Activated naive CD4-positive, alpha-beta T cell treated with anti-CD3 and anti-CD28 coated beads for 36 hours (primary cell): ENCODE measurements at regions of chr13 and their contacts with region 1.

Region 1: GRCh38 chr13:30114571-30115256 is 192.6 kb downstream of the KATNAL1 start:
- DNase-seq: peak; percentile 94
- H3K4me3 Mint-ChIP-seq: peak overlapping the region; percentile 69
- H3K27ac Mint-ChIP-seq: no peak overlapping the region
- H3K4me1 Mint-ChIP-seq: peaks cover 36% of the 10 kb centered on the region
- H3K27me3 Mint-ChIP-seq: no peaks in the 10 kb centered on the region

Region 2: DNA sequence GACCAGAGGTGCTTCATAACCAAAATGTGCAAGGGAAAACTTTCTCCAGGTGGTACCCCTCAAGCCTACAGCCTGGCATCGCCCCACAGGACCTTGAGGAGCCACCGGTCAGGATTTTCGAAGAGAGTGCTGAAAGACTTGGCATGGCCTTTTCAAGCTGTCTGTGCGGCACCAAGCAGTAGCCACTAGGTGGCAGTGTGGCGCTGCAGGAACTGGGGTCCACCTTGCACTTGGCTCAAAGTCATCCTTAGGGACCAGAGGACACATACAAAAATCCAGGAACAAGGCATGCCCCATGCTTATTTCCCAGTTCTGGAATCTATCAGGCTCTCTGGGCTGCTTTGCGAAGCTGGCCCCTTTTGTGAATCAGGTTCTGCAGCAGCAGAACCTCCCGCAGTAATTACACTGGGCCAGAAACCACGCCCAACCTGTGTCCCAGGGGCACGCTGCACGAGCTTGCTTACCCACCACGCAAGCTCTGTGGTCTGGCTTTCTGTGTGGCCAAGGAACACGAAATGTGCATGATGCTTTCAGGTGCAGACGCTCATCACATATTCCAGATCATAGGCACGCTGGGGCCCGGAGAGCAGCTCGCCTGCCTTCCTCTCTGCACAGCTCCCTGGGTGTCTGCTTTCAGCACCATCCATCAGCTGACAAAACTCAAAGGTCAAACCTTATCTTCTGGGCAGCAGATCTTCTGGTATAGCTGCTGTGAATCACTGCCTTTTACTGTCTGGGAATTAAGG is 606.4 kb before region 1 on chr13:
- CTCF ChIA-PET with region 1: interaction called, 3 read pairs
- intact Hi-C with region 1: loop called (anchors 1 kb)
- DNase-seq: peak; percentile 84
- H3K4me3 Mint-ChIP-seq: no peak overlapping the region
- H3K27ac Mint-ChIP-seq: peak overlapping the region; percentile 3
- H3K4me1 Mint-ChIP-seq: peaks cover 3% of the 10 kb centered on the region
- H3K27me3 Mint-ChIP-seq: peaks cover 3% of the 10 kb centered on the region

Region 3: GRCh38 chr13:29595380-29596063 is 519.2 kb before region 1 on chr13 and contains the start of gene SLC7A1:
- CTCF ChIA-PET with region 1: interaction called, 3 read pairs
- intact Hi-C with region 1: loop called (anchors 2 kb)
- DNase-seq: peak; percentile 84
- H3K4me3 Mint-ChIP-seq: peak within 1 kb of the TSS; percentile 90
- H3K27ac Mint-ChIP-seq: peak within 1 kb of the TSS; percentile 95
- H3K4me1 Mint-ChIP-seq: peaks cover 39% of the 10 kb centered on the region
- H3K27me3 Mint-ChIP-seq: no peaks in the 10 kb centered on the region
- total RNA-seq, gene SLC7A1: 115 to 119 TPM

Region 4: DNA sequence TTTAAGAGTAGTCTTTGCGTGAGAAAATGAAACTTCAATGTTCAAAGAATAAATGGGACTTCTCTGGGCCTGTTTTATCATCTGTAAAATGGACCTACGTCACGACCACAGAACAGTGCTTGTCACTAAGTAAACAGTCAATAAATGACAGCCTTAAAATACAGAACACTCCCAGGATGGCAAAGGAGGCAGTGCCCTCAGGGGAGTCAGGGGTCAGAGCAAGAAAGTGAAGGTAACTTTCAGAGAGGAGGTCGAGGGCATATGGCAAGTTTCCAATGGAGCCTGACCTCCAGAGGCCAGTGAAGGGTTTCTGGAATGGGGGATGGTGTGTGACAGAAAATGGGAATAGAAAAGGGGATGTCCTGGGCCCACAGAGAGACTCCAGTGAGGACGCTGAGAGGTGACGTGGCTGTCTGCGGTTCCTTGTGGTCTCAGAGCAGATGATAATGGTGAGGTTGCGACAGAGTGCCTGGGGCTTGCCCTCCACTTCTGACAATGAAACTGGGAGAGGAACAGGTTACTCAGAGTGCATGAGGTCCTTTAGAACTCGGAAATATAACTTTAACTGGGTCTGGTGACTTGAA is 356.1 kb before region 1 on chr13:
- CTCF ChIA-PET with region 1: interaction called, 12 read pairs
- intact Hi-C with region 1: no loop called
- DNase-seq: peak; percentile 84
- H3K4me3 Mint-ChIP-seq: no peak overlapping the region
- H3K27ac Mint-ChIP-seq: no peak overlapping the region
- H3K4me1 Mint-ChIP-seq: peaks cover 10% of the 10 kb centered on the region
- H3K27me3 Mint-ChIP-seq: no peaks in the 10 kb centered on the region

Region 5: DNA sequence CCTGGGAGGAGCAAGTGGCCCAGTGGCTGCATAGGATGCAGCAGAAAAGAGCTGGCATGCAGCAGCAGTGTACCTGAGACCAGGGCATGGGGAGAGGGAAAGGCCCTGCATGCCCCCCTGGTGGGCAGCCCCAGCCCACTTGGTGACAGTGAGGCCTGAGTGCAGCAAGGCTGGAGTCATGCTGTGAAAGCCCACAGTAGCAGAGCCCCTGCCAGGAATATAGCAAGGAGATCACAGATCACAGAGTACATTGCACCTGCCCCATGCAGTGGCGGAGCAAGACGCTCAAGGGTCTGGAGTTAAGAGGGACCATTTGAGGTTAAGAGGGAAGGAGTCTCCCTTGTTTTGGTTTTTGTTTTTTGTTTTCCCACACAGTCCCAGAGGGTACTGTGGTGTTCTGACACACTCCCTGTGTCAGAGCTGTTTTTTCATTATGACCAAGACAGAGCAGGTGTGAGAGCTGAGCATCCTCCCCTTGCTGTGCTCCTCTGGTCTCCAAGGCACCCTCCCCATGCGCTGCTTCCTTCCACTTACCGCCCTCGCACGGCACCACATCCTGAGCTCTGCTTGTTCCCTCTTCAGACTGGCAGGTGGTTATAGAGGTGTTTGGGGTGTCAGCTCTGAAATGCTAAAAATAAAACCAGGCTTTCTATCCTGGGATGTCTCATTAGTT is 179.3 kb before region 1 on chr13:
- CTCF ChIA-PET with region 1: interaction called, 43 read pairs
- intact Hi-C with region 1: loop called (anchors 1 kb)
- DNase-seq: peak; percentile 94
- H3K4me3 Mint-ChIP-seq: peak overlapping the region; percentile 67
- H3K27ac Mint-ChIP-seq: peak overlapping the region; percentile 83
- H3K4me1 Mint-ChIP-seq: peaks cover 39% of the 10 kb centered on the region
- H3K27me3 Mint-ChIP-seq: no peaks in the 10 kb centered on the region

Region 6: GRCh38 chr13:30033681-30034457 is 80.8 kb before region 1 on chr13:
- CTCF ChIA-PET with region 1: no interaction called
- intact Hi-C with region 1: no loop called
- DNase-seq: no peak
- H3K4me3 Mint-ChIP-seq: no peak overlapping the region
- H3K27ac Mint-ChIP-seq: no peak overlapping the region
- H3K4me1 Mint-ChIP-seq: no peaks in the 10 kb centered on the region
- H3K27me3 Mint-ChIP-seq: no peaks in the 10 kb centered on the region

Region 7: GRCh38 chr13:30158774-30159445 is 44.2 kb after region 1 on chr13:
- CTCF ChIA-PET with region 1: interaction called, 6 read pairs
- intact Hi-C with region 1: loop called (anchors 5 kb)
- DNase-seq: no peak
- H3K4me3 Mint-ChIP-seq: no peak overlapping the region
- H3K27ac Mint-ChIP-seq: no peak overlapping the region
- H3K4me1 Mint-ChIP-seq: peaks cover 25% of the 10 kb centered on the region
- H3K27me3 Mint-ChIP-seq: no peaks in the 10 kb centered on the region

Region 8: DNA sequence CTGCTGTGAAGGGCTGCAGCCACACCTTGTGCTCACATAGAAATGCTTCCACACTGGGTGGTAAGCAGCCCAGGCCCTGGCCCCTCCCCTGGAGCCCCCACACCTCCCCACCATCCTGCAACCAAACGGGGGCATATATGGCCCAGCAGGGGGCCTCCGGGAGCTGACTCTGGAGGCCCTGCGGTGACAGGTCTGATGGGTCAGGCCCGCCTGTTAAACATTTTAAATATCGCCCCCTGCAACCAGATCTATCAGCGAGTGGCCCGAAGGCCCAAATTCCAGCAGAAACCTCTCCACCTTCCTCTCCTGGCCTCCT is 240.6 kb after region 1 on chr13:
- CTCF ChIA-PET with region 1: no interaction called
- intact Hi-C with region 1: no loop called
- DNase-seq: peak; percentile 45
- H3K4me3 Mint-ChIP-seq: no peak overlapping the region
- H3K27ac Mint-ChIP-seq: no peak overlapping the region
- H3K4me1 Mint-ChIP-seq: peaks cover 20% of the 10 kb centered on the region
- H3K27me3 Mint-ChIP-seq: no peaks in the 10 kb centered on the region

Region 9: DNA sequence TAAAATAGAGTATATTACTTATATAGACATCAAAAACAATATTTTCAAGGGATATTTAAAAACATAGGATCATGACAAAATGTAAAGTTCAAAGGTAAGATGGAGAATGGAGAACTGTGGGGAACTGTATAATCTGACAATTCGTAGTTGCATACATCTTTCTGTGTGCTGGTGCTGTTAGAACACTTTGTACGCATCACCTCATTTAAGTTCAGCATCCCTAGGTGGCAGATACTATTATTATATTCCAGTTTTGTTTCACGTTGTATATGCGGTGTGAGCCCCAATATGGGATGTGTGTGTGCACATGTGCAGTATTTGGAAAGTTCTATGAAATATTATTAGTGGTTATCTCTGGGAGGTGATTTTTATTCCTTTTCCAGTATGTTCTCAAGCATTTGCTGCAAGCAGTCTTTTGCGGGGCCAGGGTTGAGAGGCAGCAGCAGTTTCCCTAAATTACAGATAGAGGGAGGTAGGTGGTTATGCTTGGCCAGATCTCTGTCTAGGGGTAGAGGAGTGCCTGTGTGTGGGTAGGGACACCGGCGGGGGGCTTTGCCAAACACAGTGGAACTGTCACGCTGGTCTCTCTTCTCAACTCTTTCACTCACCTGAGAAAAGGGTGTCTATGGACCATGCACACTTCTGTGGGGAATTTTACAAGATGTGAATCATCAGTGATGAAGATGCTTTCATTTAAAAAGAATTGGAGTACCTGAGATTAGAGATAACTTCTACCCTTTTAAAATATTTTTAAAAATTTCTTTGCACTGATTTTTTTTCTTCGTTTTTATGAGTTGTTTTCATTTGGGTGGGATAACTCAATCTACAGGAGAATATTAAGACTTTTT is 565.0 kb after region 1 on chr13:
- CTCF ChIA-PET with region 1: no interaction called
- intact Hi-C with region 1: no loop called
- DNase-seq: peak; percentile 54
- H3K4me3 Mint-ChIP-seq: no peak overlapping the region
- H3K27ac Mint-ChIP-seq: no peak overlapping the region
- H3K4me1 Mint-ChIP-seq: peaks cover 4% of the 10 kb centered on the region
- H3K27me3 Mint-ChIP-seq: no peaks in the 10 kb centered on the region

Region 10: DNA sequence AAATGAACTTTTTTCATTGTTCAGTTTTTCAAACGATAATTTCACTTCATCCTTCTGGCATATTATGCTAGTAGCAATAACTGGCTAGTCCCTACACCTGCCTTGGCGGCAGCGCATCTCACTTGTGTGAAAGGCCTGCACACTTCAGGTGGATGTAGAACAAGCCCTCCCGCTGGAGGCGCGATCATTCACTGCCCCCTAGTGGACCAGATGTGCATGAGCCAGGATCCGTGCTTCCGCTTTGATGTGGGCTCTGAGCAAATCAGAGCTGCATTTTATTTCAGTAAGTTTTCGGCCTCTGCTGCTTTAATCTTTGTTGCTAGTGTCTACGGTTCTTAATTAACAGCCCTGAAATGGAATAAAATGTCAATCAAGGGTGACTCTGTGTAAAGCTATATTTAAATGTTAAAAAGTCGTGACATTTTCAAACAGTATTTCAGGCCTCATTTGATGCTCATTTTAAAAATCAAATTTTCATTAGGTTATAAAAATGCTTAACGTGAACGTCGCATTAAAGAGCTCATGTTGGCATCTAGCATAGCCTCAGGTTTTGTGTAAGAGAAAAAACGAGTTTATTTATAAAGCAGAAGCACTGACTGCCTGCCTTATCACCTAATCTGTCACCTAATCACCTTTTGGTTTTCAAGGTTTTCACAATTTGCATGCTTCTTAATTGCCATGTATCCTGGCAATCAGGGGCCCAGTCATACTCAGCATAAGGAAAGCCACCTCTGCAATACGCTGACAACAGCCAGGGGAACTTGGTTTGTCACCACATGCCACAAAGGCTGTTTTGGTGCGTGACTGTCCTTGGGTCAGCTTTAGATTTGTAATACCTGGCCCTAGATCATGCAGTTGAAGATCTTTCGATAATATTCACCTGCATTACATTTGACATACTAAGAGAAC is 929.9 kb after region 1 on chr13:
- CTCF ChIA-PET with region 1: no interaction called
- intact Hi-C with region 1: loop called (anchors 5 kb)
- DNase-seq: peak; percentile 93
- H3K4me3 Mint-ChIP-seq: no peak overlapping the region
- H3K27ac Mint-ChIP-seq: peak overlapping the region; percentile 78
- H3K4me1 Mint-ChIP-seq: peaks cover 43% of the 10 kb centered on the region
- H3K27me3 Mint-ChIP-seq: peaks cover 2% of the 10 kb centered on the region